Activated T-helper 2 cell treated with anti-CD3 and anti-CD28 coated beads, Interferon-gamma antibody, Interleukin-2, Interleukin-4, amounts not matched to agents 10 μg/mL and 5 μg/mL and 100 μg/mL, durations not matched to agents 14 hours and 24 hours and 36 hours (primary cell): ENCODE measurements at regions of chr6 and their contacts with region 1.

Region 1: GRCh38 chr6:124054034-124054433 is 250.4 kb downstream of the NKAIN2 start:
- DNase-seq: no peak
- H3K4me3 Mint-ChIP-seq: no peak overlapping the region
- H3K27ac Mint-ChIP-seq: no peak overlapping the region
- H3K4me1 Mint-ChIP-seq: peaks cover 6% of the 10 kb centered on the region
- H3K27me3 Mint-ChIP-seq: no peaks in the 10 kb centered on the region

Region 2: DNA sequence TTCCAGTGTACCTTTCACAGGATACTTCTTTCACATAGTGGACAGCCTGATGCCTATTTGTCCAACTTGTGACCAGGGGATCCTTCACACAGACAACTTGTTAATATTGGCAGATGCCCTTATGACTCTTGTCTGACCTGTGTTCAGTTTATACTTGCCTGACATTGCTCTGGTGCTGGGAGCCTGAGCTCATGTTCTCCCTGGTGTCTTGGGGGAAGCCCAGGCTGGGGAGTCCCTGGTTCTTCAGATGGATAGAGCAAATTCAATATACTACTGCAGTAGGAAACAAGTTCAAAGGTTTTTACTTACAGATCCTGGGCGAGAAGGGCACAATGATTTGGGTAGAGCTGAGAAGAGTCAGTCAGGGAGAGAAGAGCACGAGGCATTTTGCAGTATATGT is 174.3 kb before region 1 on chr6:
- intact Hi-C with region 1: no loop called
- DNase-seq: no peak
- H3K4me3 Mint-ChIP-seq: no peak overlapping the region
- H3K27ac Mint-ChIP-seq: no peak overlapping the region
- H3K4me1 Mint-ChIP-seq: no peaks in the 10 kb centered on the region
- H3K27me3 Mint-ChIP-seq: no peaks in the 10 kb centered on the region

Region 3: DNA sequence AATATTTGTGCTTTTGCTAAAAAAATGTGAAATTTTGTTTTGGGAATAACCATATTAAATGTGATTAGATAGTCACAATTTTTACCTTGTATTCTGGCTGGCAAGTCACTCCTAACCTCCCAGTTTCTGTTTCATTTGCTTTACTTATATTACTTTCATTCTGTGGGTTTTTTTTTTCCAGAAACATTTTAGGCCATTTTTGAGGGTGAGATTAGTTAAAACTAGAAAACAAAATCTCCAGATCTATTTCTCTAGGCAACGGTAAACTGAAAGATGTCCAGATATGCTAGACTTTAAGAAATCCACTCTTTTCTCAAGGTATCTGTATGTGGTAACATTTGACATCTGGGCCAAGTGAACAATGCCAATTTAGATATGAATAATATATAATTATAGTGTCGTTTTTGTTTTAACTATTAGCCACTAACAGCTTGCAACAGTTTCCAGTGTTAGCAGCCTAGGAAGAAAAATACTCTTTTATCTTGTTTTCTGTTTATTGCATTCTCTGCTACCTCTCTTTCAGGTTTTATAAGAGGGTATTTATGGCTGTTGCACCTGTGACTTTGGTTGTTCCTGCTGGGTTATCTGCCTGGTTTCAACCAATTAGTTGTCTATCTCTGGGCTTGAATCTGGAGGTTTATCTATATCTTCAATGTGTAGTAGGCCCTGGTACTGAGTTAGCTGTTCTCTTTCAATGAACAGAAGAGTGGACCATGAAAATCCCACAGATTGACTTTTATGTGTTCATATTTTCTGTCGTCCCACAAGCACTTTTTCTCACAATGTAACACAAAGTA is 10.5 kb after region 1 on chr6:
- intact Hi-C with region 1: loop called (anchors 1 kb)
- DNase-seq: no peak
- H3K4me3 Mint-ChIP-seq: no peak overlapping the region
- H3K27ac Mint-ChIP-seq: no peak overlapping the region
- H3K4me1 Mint-ChIP-seq: peaks cover 10% of the 10 kb centered on the region
- H3K27me3 Mint-ChIP-seq: peaks cover 3% of the 10 kb centered on the region